H1 (cell line): ENCODE measurements at regions of chr1 and their contacts with region 1.

Region 1: DNA sequence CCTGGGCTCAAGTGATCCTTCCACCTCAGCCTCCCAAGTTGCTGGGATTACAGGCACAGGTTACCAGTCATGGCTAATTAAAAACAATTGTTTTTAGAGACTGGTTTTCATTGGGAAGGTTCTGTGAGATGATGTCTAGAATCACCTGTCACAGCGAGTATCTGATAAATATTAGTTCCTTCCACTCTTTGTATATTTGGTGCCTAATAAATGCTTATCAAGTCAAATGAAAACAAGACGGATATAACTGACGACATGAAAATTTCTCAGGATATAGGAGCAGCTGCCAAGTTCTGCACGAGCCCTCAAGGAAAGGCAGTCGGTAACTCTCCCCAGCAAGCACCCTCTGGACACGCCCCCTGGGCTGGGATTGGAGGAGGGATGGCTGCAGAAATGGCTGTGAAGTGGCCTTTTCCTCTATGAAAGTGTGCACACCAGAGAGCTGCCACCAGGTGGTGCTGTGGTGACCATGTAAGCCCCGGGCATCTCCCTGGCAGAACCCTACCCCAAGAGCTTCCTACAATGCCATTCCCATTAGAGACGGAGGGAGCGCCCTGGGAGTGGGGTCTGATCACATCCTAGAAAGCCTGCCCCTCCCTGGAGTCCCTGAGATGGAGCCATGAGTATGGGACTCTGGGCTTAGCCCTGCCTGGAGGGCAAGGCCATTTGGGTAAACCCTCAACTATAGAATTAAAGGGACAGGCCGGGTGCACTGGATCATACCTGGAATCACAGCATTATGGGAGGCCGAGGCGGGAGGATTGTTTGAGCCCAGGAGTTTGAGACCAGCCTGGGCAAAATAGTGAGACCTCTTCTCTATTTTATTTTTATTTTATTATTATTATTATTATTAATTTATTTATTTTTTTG is 50.9 kb downstream of the HTR6 start:
- DNase-seq: peak; percentile 96 to 98
- H3K4me3 ChIP-seq: no peak overlapping the region
- H3K27ac ChIP-seq: no peak overlapping the region
- H3K4me1 ChIP-seq: peaks cover 0 to 3% (median 0%) of the 10 kb centered on the region in 4 experiments; a peak in 1 of 7 replicates
- H3K27me3 ChIP-seq: no peaks in the 10 kb centered on the region
- CTCF ChIP-seq: peak; percentile 80 to 99 (median 97)
- EP300 ChIP-seq: peak in 1 of 2 experiments; percentile 23; a peak in 1 of 3 replicates
- POLR2A ChIP-seq: no peak
- RAD21 ChIP-seq: peak; percentile 69 to 77

Region 2: GRCh38 chr1:19728413-19729145 is 13.0 kb after region 1 on chr1:
- CTCF ChIA-PET with region 1: interaction called, 27 read pairs
- POLR2A ChIA-PET with region 1: no interaction called
- DNase-seq: no peak
- H3K4me3 ChIP-seq: no peak overlapping the region
- H3K27ac ChIP-seq: no peak overlapping the region
- H3K4me1 ChIP-seq: peaks cover 0 to 3% (median 0%) of the 10 kb centered on the region in 4 experiments; a peak in 2 of 7 replicates
- H3K27me3 ChIP-seq: no peaks in the 10 kb centered on the region
- CTCF ChIP-seq: no peak
- EP300 ChIP-seq: no peak
- POLR2A ChIP-seq: no peak
- RAD21 ChIP-seq: no peak